ENCODE measurements at regions of chr9 and their contacts with region 1.

Region 1: GRCh38 chr9:134698587-134699342 is 57.2 kb downstream of the COL5A1 start:
- DNase-seq: peak; percentile 64 to 84 (median 68)
- ATAC-seq: peak; percentile 60 to 78 (median 74)
- H3K4me3 ChIP-seq: no peak overlapping the region
- H3K27ac ChIP-seq: peak overlapping the region in 3 of 12 donors; percentile 11 to 62 (median 34)
- H3K4me1 ChIP-seq: peaks cover 0 to 28% (median 4%) of the 10 kb centered on the region in 12 donors
- H3K27me3 ChIP-seq: no peaks in the 10 kb centered on the region
- CTCF ChIP-seq: peak; percentile 83 to 97 (median 92)
- POLR2A ChIP-seq: no peak

Region 2: DNA sequence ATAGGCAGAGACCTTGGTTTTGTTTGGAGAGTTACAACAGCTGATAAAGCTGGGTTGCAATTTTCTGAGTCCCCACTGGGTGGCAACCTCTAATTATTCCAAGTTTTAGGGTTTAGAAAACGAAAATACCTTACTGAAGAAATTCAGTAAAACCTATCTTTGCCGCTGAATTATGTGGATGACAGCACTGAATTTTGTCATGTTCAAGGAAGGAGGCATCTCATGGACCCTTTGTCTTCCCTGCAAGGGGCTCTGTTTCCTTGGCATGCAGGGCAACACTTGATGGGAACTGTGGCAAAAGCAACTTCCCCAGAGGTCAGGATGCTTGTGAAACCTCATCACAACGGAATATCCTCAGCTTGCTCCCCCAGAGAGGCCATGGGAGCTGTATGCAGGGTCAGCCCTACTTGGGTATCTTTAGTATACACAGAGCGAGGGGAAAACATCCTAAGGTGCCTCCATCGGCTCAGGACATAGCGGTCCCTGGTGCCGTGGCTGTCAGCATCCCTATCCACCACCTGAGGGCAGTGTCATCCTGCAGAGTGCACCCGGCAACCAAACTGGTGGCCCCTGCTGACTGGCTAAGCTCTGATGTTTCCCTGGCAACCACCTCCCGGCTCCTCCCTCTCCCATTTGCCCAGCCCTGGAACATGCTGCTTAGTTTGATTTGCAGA is 249.4 kb before region 1 on chr9:
- intact Hi-C with region 1: loop called in 1 of 10 experiments (anchors 5 kb)
- DNase-seq: peak; percentile 91 to 95 (median 94)
- ATAC-seq: peak; percentile 93 to 98 (median 96)
- H3K4me3 ChIP-seq: no peak overlapping the region
- H3K27ac ChIP-seq: no peak overlapping the region
- H3K4me1 ChIP-seq: peaks cover 0 to 5% (median 0%) of the 10 kb centered on the region in 12 donors
- H3K27me3 ChIP-seq: no peaks in the 10 kb centered on the region
- CTCF ChIP-seq: peak; percentile 84 to 97 (median 93)
- POLR2A ChIP-seq: no peak

Region 3: GRCh38 chr9:134738869-134739659 is 40.3 kb after region 1 on chr9:
- intact Hi-C with region 1: loop called (anchors 1 to 5 kb)
- DNase-seq: peak; percentile 61 to 87 (median 79)
- ATAC-seq: peak; percentile 16 to 64 (median 49)
- H3K4me3 ChIP-seq: no peak overlapping the region
- H3K27ac ChIP-seq: no peak overlapping the region
- H3K4me1 ChIP-seq: peaks cover 0 to 39% (median 11%) of the 10 kb centered on the region in 12 donors
- H3K27me3 ChIP-seq: no peaks in the 10 kb centered on the region
- CTCF ChIP-seq: peak; percentile 81 to 93 (median 92)
- POLR2A ChIP-seq: no peak

Region 4: DNA sequence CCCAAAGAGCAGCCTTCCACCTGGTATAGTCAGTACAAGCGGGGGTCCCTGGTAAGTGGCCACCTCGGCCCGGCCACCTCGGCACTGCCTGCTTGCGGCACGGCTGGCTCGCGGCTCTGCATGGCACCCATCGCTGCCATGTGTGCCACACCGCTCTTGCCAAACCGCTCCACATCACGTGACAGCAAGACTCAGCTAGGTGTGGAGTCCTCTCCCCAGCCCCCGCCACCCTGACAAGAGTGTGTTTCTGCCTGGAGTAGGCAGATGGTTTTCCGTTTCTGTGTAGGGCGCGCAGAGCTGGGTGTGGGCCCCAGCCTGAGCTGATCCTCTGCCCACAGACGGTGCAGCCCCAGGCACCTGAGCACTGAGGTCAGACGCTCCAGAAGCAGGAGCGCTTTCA is 131.4 kb after region 1 on chr9:
- intact Hi-C with region 1: no loop called
- DNase-seq: no peak
- ATAC-seq: no peak
- H3K4me3 ChIP-seq: no peak overlapping the region
- H3K27ac ChIP-seq: no peak overlapping the region
- H3K4me1 ChIP-seq: no peaks in the 10 kb centered on the region
- H3K27me3 ChIP-seq: no peaks in the 10 kb centered on the region
- CTCF ChIP-seq: no peak
- POLR2A ChIP-seq: no peak

Region 5: DNA sequence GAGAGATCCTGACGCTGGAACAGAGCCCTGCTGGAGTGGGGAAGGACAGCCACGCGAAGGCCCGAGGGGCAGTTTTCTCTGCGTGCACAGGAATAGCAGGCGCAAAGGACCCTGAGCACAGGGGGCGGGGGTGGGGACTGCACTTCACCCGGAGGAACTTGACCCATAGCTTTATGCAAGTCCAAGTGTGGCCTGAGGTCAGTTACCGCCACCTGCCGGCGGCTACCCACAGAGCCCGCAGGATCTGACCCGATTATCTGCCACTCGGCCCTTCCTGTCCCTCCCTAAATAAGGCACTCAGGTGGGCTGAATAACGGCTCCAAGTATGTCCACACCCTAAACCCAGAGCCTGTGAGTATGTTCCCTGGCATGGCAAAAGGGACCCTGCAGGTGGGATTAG is 284.3 kb after region 1 on chr9:
- intact Hi-C with region 1: loop called in 9 of 10 experiments (anchors 2 to 10 kb)
- DNase-seq: peak in 3 of 5 donors; percentile 37 to 78 (median 53)
- ATAC-seq: peak; percentile 31 to 49 (median 40)
- H3K4me3 ChIP-seq: no peak overlapping the region
- H3K27ac ChIP-seq: no peak overlapping the region
- H3K4me1 ChIP-seq: no peaks in the 10 kb centered on the region
- H3K27me3 ChIP-seq: peaks cover 0 to 5% (median 0%) of the 10 kb centered on the region in 9 donors
- CTCF ChIP-seq: peak; percentile 33 to 63 (median 52)
- POLR2A ChIP-seq: no peak

Region 6: GRCh38 chr9:135085830-135086546 is 387.2 kb after region 1 on chr9:
- intact Hi-C with region 1: loop called in 2 of 10 experiments (anchors 5 to 10 kb)
- DNase-seq: peak; percentile 71 to 81 (median 74)
- ATAC-seq: peak; percentile 59 to 82 (median 74)
- H3K4me3 ChIP-seq: peak overlapping the region in 10 of 12 donors; percentile 32 to 63 (median 46)
- H3K27ac ChIP-seq: peak overlapping the region in 4 of 12 donors; percentile 5 to 16 (median 6)
- H3K4me1 ChIP-seq: peaks cover 0 to 38% (median 19%) of the 10 kb centered on the region in 12 donors
- H3K27me3 ChIP-seq: peaks cover 15 to 51% (median 23%) of the 10 kb centered on the region in 9 donors
- CTCF ChIP-seq: peak; percentile 82 to 98 (median 96)
- POLR2A ChIP-seq: no peak

Region 7: DNA sequence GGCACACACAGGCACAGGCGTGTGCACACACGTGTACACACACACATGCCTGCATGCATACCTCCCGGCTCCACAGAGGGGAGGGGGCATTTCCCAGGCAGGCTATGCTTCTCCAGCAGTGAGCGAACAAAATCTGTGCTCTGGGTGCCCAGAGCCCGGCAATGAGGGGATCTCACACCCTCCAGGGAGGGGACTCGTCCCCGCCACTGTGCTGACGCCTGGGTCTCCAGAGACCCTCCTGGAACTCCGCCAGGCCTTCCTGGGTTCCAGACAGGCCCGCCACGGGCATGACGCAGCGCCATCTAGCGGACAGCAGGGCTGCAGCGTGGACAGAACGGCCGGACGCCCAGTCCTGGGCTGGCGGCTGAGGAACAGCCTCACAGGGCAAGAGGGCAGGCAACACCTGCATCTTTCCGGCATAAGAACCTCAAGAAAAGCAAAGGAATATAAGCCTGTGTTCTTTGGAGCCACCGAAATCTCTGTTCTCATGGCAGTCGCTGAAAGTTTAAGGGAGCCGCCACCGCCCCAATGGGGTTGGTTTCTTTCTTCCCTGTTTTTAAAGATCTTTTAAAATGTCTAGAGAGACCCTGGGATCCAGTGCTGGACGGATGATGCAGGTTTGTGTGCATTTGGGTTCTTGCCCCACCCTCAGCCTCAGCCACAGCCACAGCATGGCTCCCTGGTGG is 645.2 kb after region 1 on chr9:
- intact Hi-C with region 1: loop called in 2 of 10 experiments (anchors 5 to 10 kb)
- DNase-seq: peak; percentile 57 to 82 (median 63)
- ATAC-seq: peak; percentile 55 to 77 (median 66)
- H3K4me3 ChIP-seq: no peak overlapping the region
- H3K27ac ChIP-seq: no peak overlapping the region
- H3K4me1 ChIP-seq: peaks cover 0 to 14% (median 0%) of the 10 kb centered on the region in 12 donors
- H3K27me3 ChIP-seq: peaks cover 0 to 70% (median 17%) of the 10 kb centered on the region in 9 donors
- CTCF ChIP-seq: peak; percentile 84 to 95 (median 89)
- POLR2A ChIP-seq: no peak

Region 8: DNA sequence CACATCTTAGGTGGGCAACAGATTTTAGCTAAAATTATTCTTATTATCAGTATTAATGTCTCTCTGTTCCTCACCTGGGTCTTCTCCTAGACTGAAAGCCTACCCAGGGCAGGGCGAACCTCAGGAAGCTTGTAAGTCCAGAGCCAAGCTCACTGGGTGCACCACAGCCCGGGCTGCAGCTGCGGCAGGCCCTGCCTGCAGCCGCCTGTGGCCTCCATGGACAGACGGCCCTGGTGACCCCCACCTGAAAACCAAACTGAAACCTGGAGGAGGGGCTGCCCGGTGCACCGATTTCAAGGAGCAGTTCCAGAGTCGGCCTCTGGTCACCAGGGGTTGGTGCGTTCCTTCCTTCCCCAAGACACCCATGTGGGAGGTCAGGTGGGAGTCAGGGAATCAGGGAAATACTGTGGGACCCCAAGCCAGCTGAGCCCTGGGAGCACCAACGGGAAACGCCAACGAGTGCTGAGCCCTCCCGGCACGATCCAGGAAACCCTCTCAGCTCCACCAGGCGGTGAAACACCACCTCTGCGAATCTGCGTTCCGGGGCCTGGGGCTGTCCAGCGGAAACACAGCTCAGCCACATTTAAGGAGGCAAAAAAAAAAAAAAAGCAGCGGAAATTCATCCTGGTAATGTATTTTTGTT is 712.2 kb after region 1 on chr9:
- intact Hi-C with region 1: loop called in 7 of 10 experiments (anchors 5 to 10 kb)
- DNase-seq: peak in 1 of 5 donors; percentile 33
- ATAC-seq: no peak
- H3K4me3 ChIP-seq: no peak overlapping the region
- H3K27ac ChIP-seq: no peak overlapping the region
- H3K4me1 ChIP-seq: peaks cover 0 to 6% (median 0%) of the 10 kb centered on the region in 12 donors
- H3K27me3 ChIP-seq: peaks cover 0 to 58% (median 11%) of the 10 kb centered on the region in 9 donors
- CTCF ChIP-seq: no peak
- POLR2A ChIP-seq: no peak